Activated T-helper 2 cell treated with anti-CD3 and anti-CD28 coated beads, Interferon-gamma antibody, Interleukin-2, Interleukin-4, amounts not matched to agents 10 μg/mL and 5 μg/mL and 100 μg/mL, durations not matched to agents 14 hours and 24 hours and 36 hours (primary cell): ENCODE measurements at regions of chr2 and their contacts with region 1.

Region 1: GRCh38 chr2:55282110-55282917 is 13.3 kb upstream of the MTIF2 start:
- DNase-seq: peak; percentile 85
- H3K4me3 Mint-ChIP-seq: peak overlapping the region; percentile 83
- H3K27ac Mint-ChIP-seq: peak overlapping the region; percentile 85
- H3K4me1 Mint-ChIP-seq: peaks cover 11% of the 10 kb centered on the region
- H3K27me3 Mint-ChIP-seq: peaks cover 2% of the 10 kb centered on the region

Region 2: GRCh38 chr2:55268907-55269644 is 13.2 kb before region 1 on chr2 and contains the start of gene MTIF2:
- intact Hi-C with region 1: loop called (anchors 1 kb)
- DNase-seq: peak; percentile 82
- H3K4me3 Mint-ChIP-seq: peak within 1 kb of the TSS; percentile 97
- H3K27ac Mint-ChIP-seq: peak within 1 kb of the TSS; percentile 92
- H3K4me1 Mint-ChIP-seq: peaks cover 15% of the 10 kb centered on the region
- H3K27me3 Mint-ChIP-seq: no peaks in the 10 kb centered on the region
- total RNA-seq, gene MTIF2: 40.2 and 42.7 TPM in 2 replicates

Region 3: GRCh38 chr2:55311444-55311870 is 29.1 kb after region 1 on chr2:
- intact Hi-C with region 1: loop called (anchors 1 kb)
- DNase-seq: no peak
- H3K4me3 Mint-ChIP-seq: no peak overlapping the region
- H3K27ac Mint-ChIP-seq: peak overlapping the region; percentile 43
- H3K4me1 Mint-ChIP-seq: peaks cover 22% of the 10 kb centered on the region
- H3K27me3 Mint-ChIP-seq: no peaks in the 10 kb centered on the region

Region 4: DNA sequence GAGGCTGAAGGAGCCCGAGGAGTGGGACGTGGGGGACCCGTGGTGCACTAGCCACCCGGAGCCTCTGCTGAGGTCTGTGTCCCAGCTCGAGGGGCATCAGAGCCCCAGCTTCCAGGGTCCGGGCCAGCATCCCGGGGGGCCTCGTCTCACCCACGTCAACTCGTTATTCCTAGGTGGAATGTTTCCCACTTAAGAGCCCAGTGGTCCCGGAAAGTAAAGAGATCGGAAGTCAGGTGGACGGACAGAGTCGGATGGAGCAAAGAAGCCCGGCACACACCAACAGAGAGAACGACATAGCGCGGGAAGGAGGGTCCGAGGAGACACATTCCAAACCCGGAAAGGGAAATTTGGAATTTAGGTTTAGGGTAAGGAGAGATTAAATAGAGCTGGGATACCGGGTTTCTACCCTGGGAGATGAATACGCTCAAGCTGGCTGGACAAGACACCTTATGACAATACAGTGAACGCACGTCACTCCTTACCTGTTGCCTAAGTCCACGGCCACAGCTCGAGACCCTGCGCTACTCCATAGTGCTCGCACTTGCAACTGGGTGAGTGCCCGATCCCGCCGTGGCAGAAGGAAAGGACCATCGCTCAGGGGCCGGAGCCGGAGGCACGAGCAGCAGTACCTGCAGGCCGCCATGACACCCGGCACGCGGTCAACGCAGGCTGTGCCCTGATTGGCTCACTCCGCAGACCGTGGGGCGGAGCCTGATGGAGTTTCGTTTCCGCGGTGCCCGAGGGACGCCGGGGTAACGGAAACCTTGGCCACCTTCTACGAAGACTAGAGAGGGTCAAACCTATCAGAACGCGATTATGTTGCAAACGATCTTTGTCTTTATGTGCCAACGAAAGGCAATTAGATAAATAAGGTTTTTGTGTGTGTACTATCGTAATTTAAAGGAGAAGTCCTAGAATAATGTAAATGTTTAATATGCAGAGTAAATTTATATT is 411.1 kb after region 1 on chr2 and contains the start of gene PNPT1:
- intact Hi-C with region 1: loop called (anchors 10 kb)
- DNase-seq: peak; percentile 92
- H3K4me3 Mint-ChIP-seq: peak within 1 kb of the TSS; percentile 92
- H3K27ac Mint-ChIP-seq: peak within 1 kb of the TSS; percentile 80
- H3K4me1 Mint-ChIP-seq: peaks cover 30% of the 10 kb centered on the region
- H3K27me3 Mint-ChIP-seq: peaks cover 6% of the 10 kb centered on the region
- total RNA-seq, gene PNPT1: 53.5 and 54.3 TPM in 2 replicates